Caco-2 (cell line): ENCODE measurements at regions of chr15 and their contacts with region 1.

Region 1: GRCh38 chr15:69160141-69160993 is at the start of gene GLCE:
- DNase-seq: peak; percentile 95 to 98
- H3K4me3 ChIP-seq: peak within 1 kb of the TSS; percentile 98
- H3K4me3 Mint-ChIP-seq: peak within 1 kb of the TSS; percentile 82
- H3K27ac Mint-ChIP-seq: peak within 1 kb of the TSS; percentile 77
- H3K4me1 ChIP-seq: no peaks in the 10 kb centered on the region
- H3K4me1 Mint-ChIP-seq: peaks cover 18% of the 10 kb centered on the region
- H3K27me3 ChIP-seq: no peaks in the 10 kb centered on the region
- H3K27me3 Mint-ChIP-seq: no peaks in the 10 kb centered on the region
- CTCF ChIP-seq: no peak
- total RNA-seq, gene GLCE: 9.1 and 10.2 TPM in 2 replicates

Region 2: DNA sequence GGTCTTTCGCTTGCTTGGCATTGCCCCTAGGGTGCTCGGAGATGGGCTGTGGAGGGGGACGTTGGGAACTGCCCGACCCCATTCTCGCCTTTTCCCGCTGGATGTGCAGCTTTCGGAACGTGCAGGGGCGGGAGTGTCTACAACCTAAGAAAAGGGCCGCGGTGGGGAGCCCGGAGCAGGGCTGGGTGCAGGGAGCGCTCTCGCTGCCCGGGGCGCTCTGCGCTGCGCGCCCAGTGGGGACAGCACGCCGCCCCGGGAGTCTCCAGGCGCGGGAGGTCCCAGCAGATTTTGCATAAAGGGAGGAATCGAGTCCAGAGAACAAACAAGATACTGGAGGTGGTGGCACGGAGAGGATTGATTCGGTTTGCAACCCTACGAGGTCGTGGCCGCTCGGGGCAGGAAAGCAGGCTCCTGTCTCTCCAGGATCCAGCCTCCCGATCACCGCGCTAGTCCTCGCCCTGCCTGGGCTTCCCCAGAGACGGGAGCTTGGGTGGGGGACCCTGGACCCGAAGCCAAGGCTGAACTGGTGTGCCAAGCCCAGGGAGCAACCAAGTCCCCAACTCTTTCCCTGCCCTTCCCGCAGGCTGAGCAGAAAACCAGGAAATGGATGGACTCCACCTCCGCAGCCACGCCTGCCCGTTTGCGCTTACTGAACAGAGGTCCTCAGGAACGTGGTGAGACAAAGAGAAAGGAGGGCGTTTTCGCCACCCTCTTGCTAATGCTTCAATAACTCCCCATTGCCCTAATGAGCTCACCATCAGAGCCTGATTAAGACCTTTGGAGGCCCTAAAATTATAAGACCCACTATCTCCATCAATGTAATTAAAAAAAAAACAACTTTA is 86.1 kb before region 1 on chr15:
- CTCF ChIA-PET with region 1: no interaction called
- POLR2A ChIA-PET with region 1: no interaction called
- intact Hi-C with region 1: loop called (anchors 5 kb)
- DNase-seq: peak; percentile 64 to 75
- H3K4me3 ChIP-seq: peak overlapping the region; percentile 79
- H3K4me3 Mint-ChIP-seq: peak overlapping the region; percentile 70
- H3K27ac Mint-ChIP-seq: no peak overlapping the region
- H3K4me1 ChIP-seq: no peaks in the 10 kb centered on the region
- H3K4me1 Mint-ChIP-seq: peaks cover 7% of the 10 kb centered on the region
- H3K27me3 ChIP-seq: no peaks in the 10 kb centered on the region
- H3K27me3 Mint-ChIP-seq: no peaks in the 10 kb centered on the region
- CTCF ChIP-seq: peak in 1 of 2 experiments; percentile 2

Region 3: DNA sequence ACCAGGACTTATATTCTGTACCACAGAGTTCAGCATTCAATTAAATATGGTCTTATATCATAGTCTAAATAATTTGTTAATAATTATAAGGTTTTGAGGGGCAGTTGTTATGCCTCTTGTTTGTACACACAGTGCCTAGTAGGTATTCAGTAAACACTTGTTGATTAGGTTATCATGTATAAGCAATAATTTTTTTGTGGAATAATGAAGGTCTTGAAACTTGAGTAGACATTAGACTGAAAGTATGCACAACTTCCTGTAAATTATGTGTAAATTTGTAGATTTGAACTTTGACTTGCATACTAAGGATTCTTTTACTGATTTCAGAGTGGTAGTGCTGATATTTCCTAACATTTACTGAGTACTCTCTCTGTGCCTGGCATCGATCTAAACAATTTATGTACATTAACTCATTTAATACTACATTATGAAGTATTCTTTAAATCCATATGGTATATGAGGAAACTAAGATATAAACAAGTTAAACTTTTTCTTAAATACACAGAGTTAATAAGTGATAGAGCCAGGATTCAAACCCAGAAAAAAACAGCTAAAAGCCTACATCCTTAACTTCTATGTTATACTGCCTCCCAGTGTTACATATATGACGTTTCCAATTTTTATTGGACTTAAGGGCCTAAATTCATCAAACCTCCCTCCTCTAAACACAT is 65.1 kb after region 1 on chr15:
- CTCF ChIA-PET with region 1: interaction called, 5 read pairs
- POLR2A ChIA-PET with region 1: no interaction called
- intact Hi-C with region 1: loop called (anchors 2 kb)
- DNase-seq: no peak
- H3K4me3 ChIP-seq: no peak overlapping the region
- H3K4me3 Mint-ChIP-seq: no peak overlapping the region
- H3K27ac Mint-ChIP-seq: no peak overlapping the region
- H3K4me1 ChIP-seq: peaks cover 16% of the 10 kb centered on the region; the same call in 1 of the 2 replicates
- H3K4me1 Mint-ChIP-seq: no peaks in the 10 kb centered on the region
- H3K27me3 ChIP-seq: no peaks in the 10 kb centered on the region
- H3K27me3 Mint-ChIP-seq: no peaks in the 10 kb centered on the region
- CTCF ChIP-seq: peak; percentile 19 to 27

Region 4: GRCh38 chr15:69265347-69265955 is 105.1 kb after region 1 on chr15:
- CTCF ChIA-PET with region 1: no interaction called
- POLR2A ChIA-PET with region 1: no interaction called
- intact Hi-C with region 1: loop called (anchors 1 kb)
- DNase-seq: peak in 1 of 2 experiments; percentile 23
- H3K4me3 ChIP-seq: no peak overlapping the region
- H3K4me3 Mint-ChIP-seq: no peak overlapping the region
- H3K27ac Mint-ChIP-seq: no peak overlapping the region
- H3K4me1 ChIP-seq: no peaks in the 10 kb centered on the region
- H3K4me1 Mint-ChIP-seq: no peaks in the 10 kb centered on the region
- H3K27me3 ChIP-seq: no peaks in the 10 kb centered on the region
- H3K27me3 Mint-ChIP-seq: no peaks in the 10 kb centered on the region
- CTCF ChIP-seq: peak; percentile 50 to 53